PC-9 (cell line): ENCODE measurements at regions of chr1 and their contacts with region 1.

Region 1: DNA sequence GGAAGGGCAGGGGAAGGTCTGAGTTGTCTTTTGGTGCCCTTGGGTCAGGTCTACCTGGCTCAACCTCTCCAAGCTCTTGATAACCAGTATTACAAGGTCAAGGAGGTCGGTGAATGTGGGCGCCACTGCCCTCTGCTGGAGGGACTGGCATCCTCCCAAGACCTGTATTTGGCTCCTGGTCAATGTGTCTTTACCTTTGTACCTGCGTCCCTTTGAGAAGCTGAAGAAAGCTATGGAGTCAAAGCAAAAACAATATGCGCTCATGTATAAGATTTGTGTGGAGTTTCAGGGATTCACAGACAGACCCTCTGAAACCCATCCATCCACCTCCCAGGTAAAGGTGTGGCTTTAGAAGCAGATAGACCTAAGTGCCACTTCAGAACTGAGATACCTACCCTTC is 61.8 kb upstream of the NBL1 start:
- DNase-seq: peak in 1 of 2 experiments; percentile 57
- H3K4me3 ChIP-seq: no peak overlapping the region
- H3K27ac ChIP-seq: no peak overlapping the region
- H3K4me1 ChIP-seq: no peaks in the 10 kb centered on the region
- H3K27me3 ChIP-seq: no peaks in the 10 kb centered on the region
- CTCF ChIP-seq: peak; percentile 70

Region 2: GRCh38 chr1:19273106-19273843 is 309.0 kb before region 1 on chr1:
- CTCF ChIA-PET with region 1: no interaction called
- POLR2A ChIA-PET with region 1: no interaction called
- intact Hi-C with region 1: no loop called
- DNase-seq: no peak
- H3K4me3 ChIP-seq: no peak overlapping the region
- H3K27ac ChIP-seq: no peak overlapping the region
- H3K4me1 ChIP-seq: no peaks in the 10 kb centered on the region
- H3K27me3 ChIP-seq: no peaks in the 10 kb centered on the region
- CTCF ChIP-seq: no peak

Region 3: GRCh38 chr1:19341201-19342072 is 240.9 kb before region 1 on chr1:
- CTCF ChIA-PET with region 1: no interaction called
- POLR2A ChIA-PET with region 1: no interaction called
- intact Hi-C with region 1: loop called (anchors 10 kb)
- DNase-seq: peak; percentile 47 to 69
- H3K4me3 ChIP-seq: no peak overlapping the region
- H3K27ac ChIP-seq: no peak overlapping the region
- H3K4me1 ChIP-seq: peaks cover 8% of the 10 kb centered on the region
- H3K27me3 ChIP-seq: no peaks in the 10 kb centered on the region
- CTCF ChIP-seq: peak; percentile 84

Region 4: GRCh38 chr1:19390901-19391595 is 191.3 kb before region 1 on chr1:
- CTCF ChIA-PET with region 1: interaction called, 3 read pairs
- POLR2A ChIA-PET with region 1: no interaction called
- intact Hi-C with region 1: loop called (anchors 10 kb)
- DNase-seq: no peak
- H3K4me3 ChIP-seq: no peak overlapping the region
- H3K27ac ChIP-seq: no peak overlapping the region
- H3K4me1 ChIP-seq: no peaks in the 10 kb centered on the region
- H3K27me3 ChIP-seq: no peaks in the 10 kb centered on the region
- CTCF ChIP-seq: peak; percentile 68